ENCODE measurements at regions of chr1 and their contacts with region 1.

Region 1: DNA sequence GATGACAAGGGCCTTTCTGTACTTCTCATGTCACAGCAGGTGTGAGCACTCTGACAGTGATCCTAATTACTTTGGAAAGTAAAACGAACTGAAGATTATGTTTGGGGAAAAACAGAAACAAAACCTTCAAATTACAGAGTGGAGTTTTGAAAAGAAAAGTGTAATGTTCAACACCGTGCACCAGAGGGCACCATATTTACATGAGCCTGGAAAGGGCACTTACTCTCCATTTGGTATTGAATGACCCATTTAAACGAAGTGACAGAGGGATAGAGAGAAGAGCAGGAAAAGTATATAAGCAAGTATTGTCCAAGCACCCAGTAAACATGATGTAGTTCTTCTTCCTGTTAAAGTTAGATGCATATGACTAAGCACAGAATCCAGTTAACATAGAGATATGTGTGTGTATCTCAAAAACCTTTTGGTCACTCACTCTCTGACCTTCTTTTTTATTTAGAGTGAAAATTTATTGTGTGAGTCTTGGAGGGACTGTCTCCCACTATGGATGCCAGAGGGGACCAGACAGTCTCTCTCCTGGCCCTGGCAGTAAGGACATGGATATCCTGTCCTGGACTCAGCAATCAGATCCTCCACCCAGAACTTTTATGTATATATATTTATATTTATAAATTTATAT is 3.8 kb upstream of the RGSL1 start:
- DNase-seq: peak in 6 of 7 donors; percentile 9 to 53 (median 34)
- H3K4me3 ChIP-seq: no peak overlapping the region
- H3K27ac ChIP-seq: no peak overlapping the region
- H3K4me1 ChIP-seq: no peaks in the 10 kb centered on the region
- H3K27me3 ChIP-seq: no peaks in the 10 kb centered on the region
- CTCF ChIP-seq: peak; percentile 33 to 69 (median 62)
- POLR2A ChIP-seq: no peak

Region 2: GRCh38 chr1:182404781-182405180 is 41.4 kb before region 1 on chr1:
- intact Hi-C with region 1: no loop called
- DNase-seq: no peak
- H3K4me3 ChIP-seq: no peak overlapping the region
- H3K27ac ChIP-seq: no peak overlapping the region
- H3K4me1 ChIP-seq: no peaks in the 10 kb centered on the region
- H3K27me3 ChIP-seq: peaks cover 18% of the 10 kb centered on the region
- CTCF ChIP-seq: no peak
- POLR2A ChIP-seq: no peak

Region 3: DNA sequence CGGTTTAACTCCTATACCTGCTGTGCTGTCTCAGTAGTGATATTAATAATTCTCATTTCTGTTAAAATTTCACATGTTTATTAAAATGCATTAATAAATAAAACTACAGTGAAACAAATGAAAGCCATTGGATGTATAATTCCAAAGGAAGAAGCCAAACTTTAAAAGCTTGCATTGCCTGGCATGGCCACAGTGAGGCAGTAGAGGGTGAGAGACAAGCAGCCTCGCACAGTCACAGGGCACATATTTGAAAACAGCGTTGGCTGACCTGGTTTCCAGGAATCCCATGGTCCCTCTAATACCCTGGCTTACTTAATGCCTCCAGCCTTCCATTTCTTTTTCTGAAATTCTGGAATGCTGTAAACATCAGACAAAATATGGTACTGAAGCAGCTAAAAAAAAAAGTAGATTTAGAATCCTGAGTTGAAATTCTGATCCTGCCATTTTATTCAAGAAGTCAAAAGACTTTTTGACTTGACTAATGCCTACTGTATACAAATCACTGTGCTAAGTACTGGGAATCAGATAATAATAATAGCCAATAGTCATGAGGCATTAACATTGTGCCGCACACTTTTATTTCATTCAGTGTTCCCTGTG is 149.6 kb after region 1 on chr1:
- intact Hi-C with region 1: loop called (anchors 5 to 10 kb)
- DNase-seq: peak; percentile 66 to 93 (median 84)
- H3K4me3 ChIP-seq: no peak overlapping the region
- H3K27ac ChIP-seq: no peak overlapping the region
- H3K4me1 ChIP-seq: peaks cover 0 to 9% of the 10 kb centered on the region in 2 donors
- H3K27me3 ChIP-seq: no peaks in the 10 kb centered on the region
- CTCF ChIP-seq: peak; percentile 78 to 92 (median 86)
- POLR2A ChIP-seq: no peak

Region 4: GRCh38 chr1:182604169-182605164 is 158.3 kb after region 1 on chr1 and contains the start of gene RGS16:
- intact Hi-C with region 1: loop called (anchors 5 to 10 kb)
- DNase-seq: peak; percentile 92 to 96 (median 93)
- H3K4me3 ChIP-seq: peak within 1 kb of the TSS in 1 of 4 donors; percentile 53
- H3K27ac ChIP-seq: peak within 1 kb of the TSS in 2 of 5 donors; percentile 22 to 57
- H3K4me1 ChIP-seq: peaks cover 0 to 27% of the 10 kb centered on the region in 2 donors
- H3K27me3 ChIP-seq: no peaks in the 10 kb centered on the region
- CTCF ChIP-seq: no peak
- POLR2A ChIP-seq: peak; percentile 69 to 79
- total RNA-seq, gene RGS16: 0.36 to 7.8 (median 3.2) TPM

Region 5: DNA sequence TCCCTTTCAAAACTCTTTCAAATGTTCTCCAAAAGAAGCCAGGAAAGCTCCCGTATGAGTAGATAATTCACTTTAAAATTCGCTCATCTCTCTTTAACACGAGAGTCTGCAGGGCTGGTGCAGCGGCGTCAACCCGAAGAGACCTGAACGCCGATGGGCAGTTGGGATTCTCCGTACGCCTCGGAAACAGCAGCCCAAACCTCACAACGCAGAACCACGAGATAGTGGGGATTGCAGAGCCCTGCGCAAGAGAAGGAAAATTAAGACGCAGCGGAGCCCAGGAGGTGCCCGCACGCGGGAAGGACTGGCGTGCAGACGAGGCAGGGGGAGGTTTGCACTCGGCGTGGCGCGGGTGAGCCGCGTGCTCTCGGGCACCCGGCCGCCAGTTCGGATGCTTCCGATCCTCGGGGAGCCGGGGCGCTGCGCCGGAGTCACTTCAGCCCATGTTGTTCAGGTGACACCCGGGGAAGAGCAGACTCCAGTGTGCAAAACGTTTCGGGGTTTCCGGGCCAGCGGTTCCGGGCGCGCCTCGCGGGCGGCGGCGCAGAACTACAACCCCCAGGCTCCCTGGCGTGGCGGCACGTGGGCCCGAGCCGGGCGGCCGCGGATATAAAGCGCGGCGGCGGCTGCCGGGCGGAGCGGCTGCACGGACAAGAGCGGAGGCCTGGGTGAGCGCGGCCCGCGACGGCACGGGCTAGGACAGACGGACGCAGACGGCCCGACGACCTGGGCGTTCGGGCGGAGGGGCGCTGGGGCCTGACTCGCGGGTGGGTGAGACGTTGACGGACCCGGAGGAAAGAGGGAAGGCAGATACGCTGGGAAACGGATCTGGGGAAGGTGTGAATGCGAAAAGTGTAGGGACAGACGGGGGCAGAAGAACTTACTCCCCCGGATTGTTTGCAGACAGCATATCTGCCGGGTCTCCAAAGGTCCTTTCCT is 343.3 kb after region 1 on chr1 and contains the start of gene NPL:
- intact Hi-C with region 1: loop called in 1 of 2 experiments (anchors 10 kb)
- DNase-seq: peak; percentile 77 to 88 (median 83)
- H3K4me3 ChIP-seq: peak within 1 kb of the TSS in 3 of 4 donors; percentile 27 to 83 (median 31)
- H3K27ac ChIP-seq: peak within 1 kb of the TSS; percentile 9 to 87 (median 58)
- H3K4me1 ChIP-seq: peaks cover 5 to 6% of the 10 kb centered on the region in 2 donors
- H3K27me3 ChIP-seq: no peaks in the 10 kb centered on the region
- CTCF ChIP-seq: peak in 1 of 6 experiments; percentile 6
- POLR2A ChIP-seq: peak; percentile 85 to 94
- total RNA-seq, gene NPL: 4.8 to 31.7 (median 22.9) TPM

Region 6: DNA sequence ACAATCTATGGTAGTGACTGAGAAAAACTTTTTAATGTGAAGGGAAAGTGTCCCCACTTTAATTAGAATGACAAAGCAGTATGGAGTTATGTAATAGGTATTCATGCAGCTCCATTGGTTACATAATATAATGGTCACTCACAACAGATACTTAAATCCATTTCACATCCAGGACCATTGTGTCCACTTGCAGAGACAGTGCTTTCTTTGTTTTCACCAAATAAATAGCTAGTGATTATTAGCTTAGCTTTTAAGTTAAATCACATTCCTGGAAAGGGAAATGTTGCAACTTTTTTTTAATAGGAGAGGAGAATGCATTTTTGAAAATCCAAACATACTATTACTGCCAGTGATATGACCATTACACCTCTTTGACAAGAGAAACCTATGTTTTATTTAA is 1381.7 kb after region 1 on chr1:
- intact Hi-C with region 1: no loop called
- DNase-seq: no peak
- H3K4me3 ChIP-seq: no peak overlapping the region
- H3K27ac ChIP-seq: no peak overlapping the region
- H3K4me1 ChIP-seq: peaks cover 0 to 23% of the 10 kb centered on the region in 2 donors
- H3K27me3 ChIP-seq: no peaks in the 10 kb centered on the region
- CTCF ChIP-seq: no peak
- POLR2A ChIP-seq: no peak

Measured in adrenal gland (tissue), 19 donors.